PC-9 (cell line): ENCODE measurements at regions of chr10 and their contacts with region 1.

Region 1: DNA sequence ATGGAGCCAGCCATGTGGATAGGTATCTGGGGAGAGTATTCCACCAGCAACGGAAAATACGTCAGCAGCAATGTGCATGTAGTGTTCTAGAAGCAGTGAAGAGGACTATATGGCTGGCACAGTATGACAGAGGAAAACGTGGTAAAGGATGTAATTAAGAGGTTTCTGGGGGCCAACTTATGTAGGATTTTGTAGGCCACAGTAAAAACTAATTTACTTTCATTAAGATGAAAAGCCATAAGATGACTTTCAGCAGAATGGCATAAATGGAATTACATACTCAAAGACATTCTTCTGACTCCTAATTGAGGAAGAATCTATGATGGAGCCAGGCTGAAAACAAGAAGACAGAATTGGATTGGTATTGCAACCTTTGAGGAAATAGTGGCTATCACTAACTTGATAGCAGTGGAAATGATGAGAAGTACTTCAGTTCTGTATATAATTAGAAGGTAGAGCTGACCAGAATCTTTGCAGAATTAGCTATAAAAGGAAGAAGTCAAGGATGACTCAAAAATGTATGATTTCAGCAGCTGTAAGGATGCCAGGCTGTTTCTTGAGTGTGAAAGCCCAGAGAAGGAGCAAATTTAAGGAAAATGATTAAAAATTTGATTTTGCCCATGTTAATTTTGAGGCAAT is 156.7 kb downstream of the MBL2 start:
- DNase-seq: no peak
- H3K4me3 ChIP-seq: no peak overlapping the region
- H3K27ac ChIP-seq: no peak overlapping the region
- H3K4me1 ChIP-seq: no peaks in the 10 kb centered on the region
- H3K27me3 ChIP-seq: no peaks in the 10 kb centered on the region
- CTCF ChIP-seq: no peak

Region 2: DNA sequence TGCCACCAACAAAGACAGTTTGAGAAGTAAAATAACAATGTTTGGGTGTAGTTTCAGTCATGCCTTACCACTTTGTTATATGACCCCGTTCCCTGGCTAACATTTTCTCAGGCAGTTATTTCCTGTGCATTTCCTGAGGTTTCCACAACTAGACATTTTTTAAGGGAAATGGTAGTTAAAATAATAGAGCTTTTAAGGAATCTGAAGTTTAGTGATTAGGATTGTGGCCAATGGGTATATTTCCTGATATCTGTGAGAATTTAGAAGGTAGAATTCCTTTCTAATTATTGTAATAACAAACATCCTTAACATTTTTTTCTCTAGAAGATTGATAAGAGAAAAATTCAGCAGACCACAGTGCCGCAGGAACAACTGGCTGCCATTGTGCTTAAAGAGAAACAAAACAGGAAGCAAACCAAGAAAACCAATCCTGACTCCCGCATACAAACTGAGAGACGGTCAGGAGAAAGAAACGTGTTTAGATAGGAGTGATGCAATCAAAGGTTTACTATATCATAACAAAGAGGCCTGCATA is 36.9 kb before region 1 on chr10:
- CTCF ChIA-PET with region 1: no interaction called
- POLR2A ChIA-PET with region 1: no interaction called
- intact Hi-C with region 1: loop called (anchors 2 kb)
- DNase-seq: no peak
- H3K4me3 ChIP-seq: no peak overlapping the region
- H3K27ac ChIP-seq: no peak overlapping the region
- H3K4me1 ChIP-seq: no peaks in the 10 kb centered on the region
- H3K27me3 ChIP-seq: no peaks in the 10 kb centered on the region
- CTCF ChIP-seq: no peak